AG04449 (cell line): ENCODE measurements at regions of chr9 and their contacts with region 1.

Region 1: DNA sequence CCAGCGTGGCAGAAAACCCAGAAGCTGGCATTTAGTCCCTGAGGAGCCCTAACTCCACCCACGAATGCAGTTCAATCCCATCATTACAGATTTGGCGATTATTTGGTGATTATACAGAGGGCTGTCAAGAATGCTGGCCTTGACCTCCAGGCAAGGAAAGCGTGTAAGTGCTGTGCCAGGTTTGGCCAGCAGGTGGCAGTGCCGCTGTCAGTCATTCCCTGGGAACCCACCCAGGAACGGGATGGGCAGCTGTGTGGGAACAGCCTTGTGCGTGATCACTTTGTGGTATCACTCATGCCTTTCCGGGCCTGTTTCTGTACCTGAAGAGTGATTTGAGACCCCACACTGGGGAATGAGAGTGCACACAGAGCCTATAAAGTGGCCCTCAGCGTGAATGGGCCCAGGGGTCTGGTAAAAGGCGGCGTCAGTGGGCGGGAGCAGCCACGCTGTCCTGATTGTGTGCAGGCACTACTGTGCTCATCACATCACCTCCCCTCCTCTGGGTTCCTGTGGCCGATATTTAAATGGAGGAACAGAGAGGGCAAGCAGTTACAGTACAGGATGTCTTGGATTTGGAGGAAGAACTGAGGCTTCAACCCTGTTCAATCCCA is 215.6 kb downstream of the ROR2 start:
- DNase-seq: no peak
- H3K4me3 ChIP-seq: no peak overlapping the region
- CTCF ChIP-seq: peak; percentile 96

Region 2: DNA sequence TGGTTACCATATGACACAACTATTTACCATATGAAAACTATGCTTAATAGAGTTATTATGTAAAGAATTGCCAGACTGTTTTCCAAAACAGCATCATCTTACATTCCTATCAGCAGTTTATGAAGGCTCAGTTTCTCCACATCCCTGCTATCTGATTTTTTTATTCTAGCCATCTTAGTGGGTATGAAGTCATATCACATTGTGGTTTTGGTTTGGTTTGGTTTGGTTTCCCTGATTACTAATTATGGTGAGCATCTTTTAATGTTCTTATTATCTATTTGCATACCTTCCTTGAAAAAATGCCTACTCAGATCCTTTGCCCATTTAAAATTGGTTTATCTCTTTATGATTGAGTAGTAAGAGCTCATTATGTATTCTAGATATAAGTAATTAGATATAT is 111.5 kb before region 1 on chr9:
- CTCF ChIA-PET with region 1: no interaction called
- POLR2A ChIA-PET with region 1: no interaction called
- DNase-seq: no peak
- H3K4me3 ChIP-seq: no peak overlapping the region
- CTCF ChIP-seq: no peak

Region 3: DNA sequence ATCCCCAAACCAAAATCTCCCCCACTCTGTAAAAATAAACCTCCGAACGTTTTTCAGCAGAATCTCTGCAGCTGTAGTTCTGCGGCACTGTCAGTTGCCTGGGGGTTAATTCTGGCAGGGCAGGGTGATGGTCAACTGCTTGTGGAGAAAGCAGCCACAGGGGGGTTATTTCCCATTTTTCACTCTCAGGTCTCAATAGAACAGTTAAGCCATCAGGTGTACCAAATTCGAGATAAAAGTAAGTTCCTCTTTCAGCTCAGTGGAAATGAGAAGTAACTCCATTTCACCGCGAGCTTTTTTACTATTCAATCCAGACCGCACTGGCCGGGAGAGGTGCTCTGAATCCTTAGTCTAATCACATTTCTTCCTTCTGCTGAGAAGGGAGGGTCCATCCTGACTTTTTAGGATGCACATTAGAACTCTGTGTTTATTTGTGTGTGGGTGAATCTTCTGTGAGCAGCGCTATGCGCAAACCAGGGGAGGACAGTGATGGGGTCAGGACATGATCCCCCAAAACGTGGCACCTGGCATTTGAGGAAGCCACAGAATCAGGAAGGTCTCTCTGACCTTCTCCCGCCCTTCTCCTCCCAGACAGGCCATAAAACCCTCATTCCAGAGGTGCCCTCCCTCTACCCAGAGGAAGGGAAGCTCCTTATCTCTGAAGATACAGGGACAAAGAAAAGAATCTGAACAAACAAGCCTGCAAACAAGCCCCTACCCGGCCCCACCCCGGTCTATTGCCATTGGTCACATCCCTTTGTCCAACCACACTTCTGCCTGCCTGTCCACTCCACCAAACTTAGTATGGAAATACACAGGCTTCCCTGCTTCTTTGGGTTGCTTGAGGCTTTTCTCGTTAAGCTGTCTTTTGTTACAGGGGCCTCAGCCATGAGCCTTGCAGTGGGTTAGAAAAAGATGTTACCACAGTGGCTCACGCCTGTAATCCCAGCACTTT is 13.4 kb before region 1 on chr9:
- CTCF ChIA-PET with region 1: interaction called, 49 read pairs
- POLR2A ChIA-PET with region 1: no interaction called
- DNase-seq: no peak
- H3K4me3 ChIP-seq: no peak overlapping the region
- CTCF ChIP-seq: no peak

Region 4: DNA sequence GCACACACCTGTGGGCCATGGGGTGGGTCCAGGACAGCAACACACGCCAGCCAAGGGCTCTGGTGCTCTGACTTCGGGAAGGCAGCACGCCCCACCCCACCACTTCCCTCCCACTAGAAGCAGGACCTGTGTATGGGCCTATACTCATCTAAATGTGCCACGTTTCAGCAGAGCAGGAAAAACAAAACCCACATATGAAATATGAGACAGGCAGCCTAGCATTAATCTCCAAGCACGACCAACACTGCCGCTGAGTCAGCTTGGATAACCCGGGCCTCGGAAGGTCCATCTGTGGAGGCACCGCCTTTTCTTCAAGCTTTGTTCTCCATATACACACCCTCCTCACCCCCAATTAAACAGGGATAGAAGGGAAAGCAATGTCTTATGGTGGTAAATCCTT is 12.4 kb after region 1 on chr9:
- CTCF ChIA-PET with region 1: interaction called, 29 read pairs
- POLR2A ChIA-PET with region 1: no interaction called
- DNase-seq: no peak
- H3K4me3 ChIP-seq: no peak overlapping the region
- CTCF ChIP-seq: no peak

Region 5: GRCh38 chr9:91775011-91775707 is 40.7 kb after region 1 on chr9:
- CTCF ChIA-PET with region 1: interaction called, 17 read pairs
- POLR2A ChIA-PET with region 1: no interaction called
- DNase-seq: no peak
- H3K4me3 ChIP-seq: no peak overlapping the region
- CTCF ChIP-seq: peak; percentile 92